ENCODE measurements at regions of chr18 and their contacts with region 1.

Region 1: DNA sequence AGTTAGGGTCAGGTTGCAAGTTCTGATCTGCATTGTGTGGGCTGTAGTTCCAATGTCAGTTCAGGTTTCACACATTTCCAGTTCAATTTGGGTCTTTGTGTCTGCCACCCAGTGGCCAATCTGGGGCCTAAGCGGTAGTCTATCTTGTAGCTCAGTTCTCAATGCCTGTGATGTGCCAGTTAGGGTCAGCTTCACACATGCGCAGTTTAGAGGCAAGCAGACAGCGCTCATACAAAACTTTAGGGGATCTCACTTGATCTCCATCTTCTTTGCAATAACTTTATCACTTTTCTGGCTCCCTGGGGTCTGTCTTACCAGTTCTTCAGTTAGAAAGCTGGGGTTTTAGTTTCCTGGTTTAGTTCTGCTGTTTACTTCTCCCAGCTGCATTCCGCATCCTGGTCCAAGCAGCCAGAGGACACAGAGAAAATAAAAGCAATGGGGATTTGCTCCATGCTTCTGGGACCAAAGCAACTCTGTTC is 11.0 kb upstream of the ZNF24 start:
- DNase-seq: peak; percentile 81
- H3K4me3 ChIP-seq: peak overlapping the region in 1 of 8 donors; percentile 20
- H3K27ac ChIP-seq: no peak overlapping the region
- H3K4me1 ChIP-seq: peaks cover 0 to 8% (median 0%) of the 10 kb centered on the region in 6 donors
- H3K27me3 ChIP-seq: no peaks in the 10 kb centered on the region
- CTCF ChIP-seq: peak; percentile 50 to 86 (median 76)
- POLR2A ChIP-seq: no peak

Region 2: GRCh38 chr18:34787931-34788532 is 567.1 kb before region 1 on chr18:
- intact Hi-C with region 1: no loop called
- DNase-seq: no peak
- H3K4me3 ChIP-seq: no peak overlapping the region
- H3K27ac ChIP-seq: no peak overlapping the region
- H3K4me1 ChIP-seq: no peaks in the 10 kb centered on the region
- H3K27me3 ChIP-seq: no peaks in the 10 kb centered on the region
- CTCF ChIP-seq: peak; percentile 37 to 76 (median 67)
- POLR2A ChIP-seq: no peak

Region 3: DNA sequence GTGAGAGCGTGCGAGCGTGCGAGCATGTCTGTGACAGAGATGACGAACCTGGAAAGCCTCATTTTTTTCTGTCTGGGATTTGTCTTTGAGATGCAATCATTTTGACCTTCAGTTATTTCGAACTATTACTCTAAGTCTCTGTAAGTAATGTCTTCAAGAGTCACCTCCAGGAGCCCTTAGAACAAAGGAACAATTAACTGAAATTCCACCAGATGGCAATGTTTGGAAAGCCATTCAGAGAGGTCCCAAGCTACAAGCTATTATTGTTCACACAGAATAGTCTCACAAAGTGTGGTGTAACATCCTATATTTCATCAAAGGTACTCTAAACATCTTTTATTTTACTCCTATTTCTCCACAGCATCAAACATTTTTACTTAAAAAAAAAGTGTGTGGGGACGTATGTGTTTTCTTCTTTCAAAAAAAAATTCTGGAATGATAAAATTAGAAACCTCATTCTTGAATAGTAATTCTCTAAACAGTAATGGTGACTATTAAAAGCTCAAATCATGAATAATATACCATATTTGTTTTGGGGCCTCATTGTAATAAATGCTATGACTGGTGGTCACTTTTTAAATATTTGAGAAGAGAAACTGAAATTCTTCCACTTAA is 349.1 kb before region 1 on chr18:
- intact Hi-C with region 1: loop called (anchors 10 kb)
- DNase-seq: no peak
- H3K4me3 ChIP-seq: no peak overlapping the region
- H3K27ac ChIP-seq: no peak overlapping the region
- H3K4me1 ChIP-seq: peaks cover 0 to 8% (median 0%) of the 10 kb centered on the region in 6 donors
- H3K27me3 ChIP-seq: no peaks in the 10 kb centered on the region
- CTCF ChIP-seq: peak; percentile 40 to 72 (median 63)
- POLR2A ChIP-seq: no peak

Region 4: DNA sequence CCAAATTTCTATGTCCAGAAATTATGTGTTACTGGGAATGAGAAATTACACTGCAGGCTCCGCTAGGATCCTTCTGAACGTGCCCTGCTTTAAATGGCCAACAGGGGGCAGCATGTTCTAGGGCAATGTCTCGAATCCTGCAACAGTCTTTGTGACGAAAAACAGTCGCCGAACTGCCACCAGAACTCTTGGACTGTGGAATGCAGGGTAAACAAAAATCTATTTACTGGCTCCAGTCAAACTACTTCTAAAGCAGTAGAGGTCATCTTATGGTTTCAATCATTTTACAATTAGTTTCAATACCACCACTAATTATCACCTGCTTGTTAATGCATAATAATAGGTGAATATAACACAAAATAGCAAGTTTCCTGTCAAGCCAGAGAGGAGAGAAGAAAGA is 124.1 kb before region 1 on chr18:
- intact Hi-C with region 1: loop called (anchors 5 kb)
- DNase-seq: peak; percentile 88
- H3K4me3 ChIP-seq: peak overlapping the region in 1 of 8 donors; percentile 49
- H3K27ac ChIP-seq: no peak overlapping the region
- H3K4me1 ChIP-seq: peaks cover 0 to 8% (median 6%) of the 10 kb centered on the region in 6 donors
- H3K27me3 ChIP-seq: no peaks in the 10 kb centered on the region
- CTCF ChIP-seq: peak; percentile 72 to 96 (median 91)
- POLR2A ChIP-seq: no peak

Measured in spleen (tissue), 13 donors.